Mammary epithelial cell (primary cell): ENCODE measurements at regions of chr18 and their contacts with region 1.

Region 1: DNA sequence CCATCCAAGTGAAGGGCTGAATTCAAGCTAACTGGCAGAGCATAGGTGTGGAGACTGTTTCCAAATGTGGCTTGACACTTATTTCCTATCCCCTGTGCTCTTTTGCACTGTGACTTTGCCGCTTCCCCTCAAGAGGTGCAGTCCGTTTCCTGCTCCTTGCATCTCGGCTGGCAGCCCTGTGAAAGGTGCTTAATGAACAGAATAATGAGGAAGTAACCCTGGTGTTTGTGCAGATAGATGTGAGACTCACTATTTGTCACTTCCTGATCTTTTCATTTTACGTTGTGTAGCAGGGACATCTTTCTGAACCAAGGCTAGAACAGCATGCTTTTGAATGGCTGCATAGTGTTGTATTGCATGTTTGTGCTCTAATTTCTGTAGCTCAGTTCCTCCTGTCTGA is 60.8 kb downstream of the CEP192 start:
- DNase-seq: no peak
- H3K4me3 ChIP-seq: no peak overlapping the region
- H3K27ac ChIP-seq: no peak overlapping the region
- H3K4me1 ChIP-seq: no peaks in the 10 kb centered on the region
- H3K27me3 ChIP-seq: no peaks in the 10 kb centered on the region
- CTCF ChIP-seq: no peak

Region 2: GRCh38 chr18:13095466-13095865 is 43.5 kb after region 1 on chr18:
- CTCF ChIA-PET with region 1: no interaction called
- dilution Hi-C with region 1: loop called (anchors 5 kb)
- in situ Hi-C with region 1: no loop called
- intact Hi-C with region 1: no loop called
- DNase-seq: no peak
- H3K4me3 ChIP-seq: no peak overlapping the region
- H3K27ac ChIP-seq: no peak overlapping the region
- H3K4me1 ChIP-seq: no peaks in the 10 kb centered on the region
- H3K27me3 ChIP-seq: no peaks in the 10 kb centered on the region
- CTCF ChIP-seq: no peak